ENCODE measurements at regions of chr22 and their contacts with region 1.

Region 1: GRCh38 chr22:50469377-50470305 is 5.2 kb downstream of the SBF1 start:
- DNase-seq: peak; percentile 97
- ATAC-seq: peak; percentile 84
- H3K4me3 Mint-ChIP-seq: peak overlapping the region; percentile 59
- H3K27ac Mint-ChIP-seq: peak overlapping the region; percentile 95
- H3K4me1 Mint-ChIP-seq: peaks cover 53% of the 10 kb centered on the region
- H3K27me3 Mint-ChIP-seq: no peaks in the 10 kb centered on the region

Region 2: DNA sequence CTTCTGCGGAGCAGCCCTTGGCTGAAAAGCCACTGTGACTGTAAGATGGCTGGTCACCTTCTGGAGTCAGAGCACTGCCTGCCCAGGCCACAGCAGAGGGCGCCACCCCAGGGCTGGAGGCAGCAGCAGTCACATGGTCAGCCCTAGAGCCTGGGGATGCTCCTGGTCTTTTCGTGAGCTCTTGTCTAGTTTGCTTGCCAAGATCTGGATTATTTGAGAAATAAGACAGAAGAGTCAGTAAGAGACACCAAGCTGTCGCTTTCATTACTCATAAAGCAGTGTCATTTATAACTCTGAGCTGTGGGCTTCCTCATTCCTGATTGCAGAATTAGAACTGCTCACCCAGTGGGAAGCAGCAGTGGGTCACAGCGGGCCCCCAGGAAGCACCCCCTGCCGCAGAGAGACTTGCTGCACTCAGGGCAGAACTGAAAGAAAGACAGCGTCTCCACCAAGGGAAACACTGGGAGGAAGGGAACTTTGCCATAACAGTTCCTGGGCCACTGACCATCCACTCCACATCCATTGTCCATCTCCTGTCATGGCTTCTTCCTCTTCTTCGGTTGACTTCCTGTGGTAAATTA is 69.8 kb before region 1 on chr22:
- CTCF ChIA-PET with region 1: no interaction called
- POLR2A ChIA-PET with region 1: no interaction called
- intact Hi-C with region 1: no loop called
- DNase-seq: peak; percentile 69
- ATAC-seq: peak; percentile 87
- H3K4me3 Mint-ChIP-seq: no peak overlapping the region
- H3K27ac Mint-ChIP-seq: peak overlapping the region; percentile 66
- H3K4me1 Mint-ChIP-seq: peaks cover 11% of the 10 kb centered on the region
- H3K27me3 Mint-ChIP-seq: no peaks in the 10 kb centered on the region

Region 3: GRCh38 chr22:50432131-50432876 is 37.3 kb before region 1 on chr22:
- CTCF ChIA-PET with region 1: no interaction called
- POLR2A ChIA-PET with region 1: no interaction called
- intact Hi-C with region 1: no loop called
- DNase-seq: no peak
- ATAC-seq: no peak
- H3K4me3 Mint-ChIP-seq: no peak overlapping the region
- H3K27ac Mint-ChIP-seq: no peak overlapping the region
- H3K4me1 Mint-ChIP-seq: no peaks in the 10 kb centered on the region
- H3K27me3 Mint-ChIP-seq: no peaks in the 10 kb centered on the region

Region 4: GRCh38 chr22:50456466-50457234 is 13.0 kb before region 1 on chr22:
- CTCF ChIA-PET with region 1: interaction called, 4 read pairs
- POLR2A ChIA-PET with region 1: interaction called, 13 read pairs
- intact Hi-C with region 1: no loop called
- DNase-seq: peak; percentile 52
- ATAC-seq: peak; percentile 57
- H3K4me3 Mint-ChIP-seq: no peak overlapping the region
- H3K27ac Mint-ChIP-seq: no peak overlapping the region
- H3K4me1 Mint-ChIP-seq: peaks cover 11% of the 10 kb centered on the region
- H3K27me3 Mint-ChIP-seq: no peaks in the 10 kb centered on the region

Region 5: DNA sequence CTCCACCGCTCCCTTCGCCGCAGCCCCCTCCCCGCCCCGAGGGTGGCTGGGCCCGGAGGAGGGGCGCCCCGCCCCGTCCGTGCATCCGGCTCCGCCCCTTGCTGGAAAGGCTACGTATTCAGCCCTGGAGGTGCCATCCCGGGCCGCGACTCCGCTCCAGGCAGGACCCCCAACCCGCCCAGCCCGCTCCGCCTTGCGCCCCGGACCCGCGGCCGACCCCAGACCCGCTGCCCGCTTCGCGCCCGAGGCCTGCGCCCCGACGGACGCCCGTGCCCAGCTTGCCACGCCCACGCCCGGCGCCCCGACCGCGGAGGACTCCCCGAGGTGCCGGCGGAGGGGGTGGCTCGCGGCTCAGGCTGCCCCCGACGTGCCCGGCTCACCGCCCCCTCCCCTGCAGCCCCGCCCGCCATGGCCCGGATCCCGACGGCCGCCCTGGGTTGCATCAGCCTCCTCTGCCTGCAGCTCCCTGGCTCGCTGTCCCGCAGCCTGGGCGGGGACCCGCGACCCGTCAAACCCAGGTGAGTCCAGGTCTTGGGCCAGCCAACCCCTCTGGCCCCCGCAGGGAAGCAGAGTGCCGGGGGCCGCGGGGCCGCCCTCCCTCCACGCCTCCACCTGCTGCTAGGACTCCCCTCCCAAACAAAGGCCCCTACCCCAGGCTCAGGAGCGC is 11.9 kb after region 1 on chr22 and contains the start of gene ADM2:
- CTCF ChIA-PET with region 1: no interaction called
- POLR2A ChIA-PET with region 1: no interaction called
- intact Hi-C with region 1: loop called in 1 of 2 experiments (anchors 1 kb)
- DNase-seq: peak; percentile 82
- ATAC-seq: peak; percentile 87
- H3K4me3 Mint-ChIP-seq: peak within 1 kb of the TSS; percentile 74
- H3K27ac Mint-ChIP-seq: no peak within 1 kb of the TSS
- H3K4me1 Mint-ChIP-seq: no peaks in the 10 kb centered on the region
- H3K27me3 Mint-ChIP-seq: peaks cover 8% of the 10 kb centered on the region
- total RNA-seq, gene ADM2: 7.5 to 7.9 TPM

Measured in activated CD4-positive, alpha-beta T cell treated with anti-CD3 and anti-CD28 coated beads for 36 hours (primary cell).